Common myeloid progenitor, CD34-positive (primary cell): ENCODE measurements at regions of chr3 and their contacts with region 1.

Region 1: GRCh38 chr3:122942937-122943827 is 84.4 kb downstream of the SEMA5B start:
- DNase-seq: peak; percentile 34 to 50 (median 44)
- H3K4me3 ChIP-seq: no peak overlapping the region
- H3K27ac ChIP-seq: no peak overlapping the region
- H3K4me1 ChIP-seq: peaks cover 0 to 8% (median 1%) of the 10 kb centered on the region in 4 experiments
- H3K27me3 ChIP-seq: peaks cover 0 to 7% (median 0%) of the 10 kb centered on the region in 5 experiments

Region 2: GRCh38 chr3:122929190-122930062 is 13.8 kb before region 1 on chr3:
- CTCF ChIA-PET with region 1: interaction called, 11 read pairs
- POLR2A ChIA-PET with region 1: no interaction called
- DNase-seq: no peak
- H3K4me3 ChIP-seq: no peak overlapping the region
- H3K27ac ChIP-seq: no peak overlapping the region
- H3K4me1 ChIP-seq: no peaks in the 10 kb centered on the region
- H3K27me3 ChIP-seq: peaks cover 0 to 7% (median 2%) of the 10 kb centered on the region in 5 experiments

Region 3: DNA sequence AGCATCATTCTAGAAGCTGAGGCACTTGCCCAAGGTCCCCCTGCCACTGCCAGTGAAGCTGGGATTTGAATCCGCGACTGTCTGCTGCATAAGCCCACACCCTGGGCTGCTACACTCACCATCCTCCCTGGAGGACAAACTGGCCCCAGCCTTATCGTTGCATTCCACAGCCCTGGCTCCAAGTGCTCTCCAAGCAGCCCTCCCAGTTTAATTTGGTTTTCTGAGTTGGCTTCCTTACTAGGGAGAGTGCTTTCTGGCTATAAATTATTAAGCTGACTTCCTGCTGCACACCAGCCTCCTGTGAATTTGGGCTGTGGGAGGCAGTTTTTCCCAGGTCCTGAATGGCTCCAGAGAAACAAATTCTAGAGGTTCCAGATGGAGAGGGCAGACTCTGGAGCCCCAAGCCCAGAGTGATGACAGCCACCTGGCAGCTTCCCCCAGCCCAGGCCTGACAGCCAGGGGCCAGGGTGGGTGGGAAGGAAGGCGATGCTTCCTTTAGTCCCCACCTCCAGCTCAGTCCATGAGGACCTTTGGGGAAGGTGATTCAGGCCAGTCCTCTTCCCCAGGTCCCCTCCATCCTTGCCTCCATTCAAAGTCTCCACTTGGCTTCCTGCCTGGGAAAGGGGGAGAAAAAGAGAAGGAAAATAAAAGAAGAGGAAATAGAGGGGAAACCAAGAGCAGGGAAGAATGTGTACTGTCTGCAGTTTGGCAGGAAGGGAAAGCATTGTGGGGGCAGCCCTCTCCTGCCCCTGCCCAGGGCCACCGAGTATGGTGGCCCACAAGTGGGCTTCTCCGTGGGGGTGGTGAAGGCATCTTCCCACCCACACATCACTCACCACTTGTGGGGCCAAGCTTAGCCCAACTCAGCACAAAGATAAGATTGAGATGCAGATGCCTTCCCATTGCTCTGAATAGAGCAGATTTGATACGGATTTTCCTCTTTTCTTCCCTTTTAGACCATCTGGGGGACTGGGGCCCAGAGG is 14.8 kb after region 1 on chr3:
- CTCF ChIA-PET with region 1: interaction called, 15 read pairs
- POLR2A ChIA-PET with region 1: no interaction called
- DNase-seq: no peak
- H3K4me3 ChIP-seq: no peak overlapping the region
- H3K27ac ChIP-seq: no peak overlapping the region
- H3K4me1 ChIP-seq: peaks cover 0 to 8% (median 3%) of the 10 kb centered on the region in 4 experiments
- H3K27me3 ChIP-seq: peaks cover 0 to 5% (median 0%) of the 10 kb centered on the region in 5 experiments

Region 4: DNA sequence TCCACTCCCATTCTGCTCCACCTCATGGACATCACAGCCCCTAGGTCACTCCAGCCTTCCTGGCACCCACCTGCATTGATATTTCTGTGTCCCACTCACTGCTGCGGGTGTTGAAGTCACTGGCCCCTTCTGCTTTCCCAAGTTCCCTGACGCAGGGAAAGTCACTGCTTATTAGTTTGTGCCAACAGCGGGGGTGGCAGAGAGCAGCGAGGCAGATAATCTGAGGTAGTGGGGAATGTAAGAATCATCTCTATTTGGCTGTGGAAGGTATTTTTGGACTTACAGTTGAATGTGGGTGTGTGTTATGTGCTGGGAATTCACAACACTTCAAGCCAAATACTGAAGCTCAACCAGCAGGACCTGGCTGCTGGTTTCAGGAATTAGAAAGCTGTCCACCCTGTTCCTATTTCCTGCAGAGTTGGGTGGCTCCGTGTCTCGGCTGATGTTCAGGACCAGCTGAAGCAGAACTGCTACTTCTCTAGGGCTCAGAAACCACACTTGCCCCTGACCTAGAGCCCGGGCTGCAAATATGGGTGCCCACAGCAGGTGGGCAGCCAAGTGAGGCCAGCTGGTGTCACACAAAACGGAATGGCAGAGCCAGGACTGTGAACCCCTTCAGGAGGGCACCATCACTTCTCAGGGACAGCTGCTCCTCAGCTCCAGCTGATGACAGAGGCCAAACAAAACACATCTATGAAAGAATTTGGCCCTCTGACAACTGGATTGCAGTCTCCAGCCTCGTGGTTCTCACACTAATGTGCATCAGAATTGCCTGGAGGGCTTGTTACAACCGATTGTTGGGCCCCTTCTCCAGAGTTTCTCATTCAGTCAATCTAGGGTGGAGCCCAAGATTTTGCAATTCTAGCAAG is 26.6 kb after region 1 on chr3:
- CTCF ChIA-PET with region 1: interaction called, 19 read pairs
- POLR2A ChIA-PET with region 1: no interaction called
- DNase-seq: no peak
- H3K4me3 ChIP-seq: no peak overlapping the region
- H3K27ac ChIP-seq: no peak overlapping the region
- H3K4me1 ChIP-seq: peaks cover 0 to 15% (median 10%) of the 10 kb centered on the region in 4 experiments
- H3K27me3 ChIP-seq: no peaks in the 10 kb centered on the region

Region 5: GRCh38 chr3:122975163-122975923 is 32.2 kb after region 1 on chr3:
- CTCF ChIA-PET with region 1: interaction called, 19 read pairs
- POLR2A ChIA-PET with region 1: no interaction called
- DNase-seq: peak; percentile 74 to 94 (median 91)
- H3K4me3 ChIP-seq: peak overlapping the region in 4 of 7 experiments; percentile 4 to 56 (median 32)
- H3K27ac ChIP-seq: no peak overlapping the region
- H3K4me1 ChIP-seq: peaks cover 0 to 27% (median 24%) of the 10 kb centered on the region in 4 experiments
- H3K27me3 ChIP-seq: peaks cover 0 to 3% (median 0%) of the 10 kb centered on the region in 5 experiments

Region 6: DNA sequence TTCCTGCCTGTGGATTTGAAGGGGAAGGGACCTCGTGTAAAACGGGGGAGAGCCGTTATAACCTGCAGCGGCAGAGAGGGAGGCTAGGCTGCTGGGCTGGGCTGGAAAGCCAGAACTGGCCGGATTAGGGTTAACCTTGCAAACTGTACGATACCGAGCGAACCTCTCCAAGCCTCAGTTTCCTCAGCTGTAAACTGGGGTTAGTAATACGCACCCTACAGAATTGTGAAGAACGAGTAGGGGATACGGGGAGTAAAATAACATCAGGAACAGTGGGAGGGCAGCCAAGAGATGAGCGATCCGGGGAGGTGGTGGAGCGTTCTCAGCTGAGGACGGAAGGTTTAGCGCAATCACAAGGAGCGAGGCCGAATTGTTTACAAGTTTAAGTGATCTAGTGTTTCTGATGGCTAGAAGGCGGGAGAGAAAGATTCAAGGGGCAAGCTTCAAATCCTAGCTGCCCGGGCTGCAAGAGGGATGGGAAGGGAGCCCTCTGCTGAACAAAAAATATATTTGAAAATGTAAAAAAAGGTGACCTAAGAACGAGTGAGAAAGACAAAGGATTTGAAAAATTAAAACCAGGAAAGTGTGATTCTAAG is 85.1 kb after region 1 on chr3:
- CTCF ChIA-PET with region 1: interaction called, 66 read pairs
- POLR2A ChIA-PET with region 1: no interaction called
- DNase-seq: peak; percentile 56 to 68 (median 64)
- H3K4me3 ChIP-seq: peak overlapping the region in 6 of 7 experiments; percentile 50 to 71 (median 64)
- H3K27ac ChIP-seq: no peak overlapping the region
- H3K4me1 ChIP-seq: peaks cover 6 to 30% (median 26%) of the 10 kb centered on the region in 4 experiments
- H3K27me3 ChIP-seq: peaks cover 2 to 76% (median 56%) of the 10 kb centered on the region in 5 experiments